HCT116 (cell line): ENCODE measurements at regions of chr17 and their contacts with region 1.

Region 1: DNA sequence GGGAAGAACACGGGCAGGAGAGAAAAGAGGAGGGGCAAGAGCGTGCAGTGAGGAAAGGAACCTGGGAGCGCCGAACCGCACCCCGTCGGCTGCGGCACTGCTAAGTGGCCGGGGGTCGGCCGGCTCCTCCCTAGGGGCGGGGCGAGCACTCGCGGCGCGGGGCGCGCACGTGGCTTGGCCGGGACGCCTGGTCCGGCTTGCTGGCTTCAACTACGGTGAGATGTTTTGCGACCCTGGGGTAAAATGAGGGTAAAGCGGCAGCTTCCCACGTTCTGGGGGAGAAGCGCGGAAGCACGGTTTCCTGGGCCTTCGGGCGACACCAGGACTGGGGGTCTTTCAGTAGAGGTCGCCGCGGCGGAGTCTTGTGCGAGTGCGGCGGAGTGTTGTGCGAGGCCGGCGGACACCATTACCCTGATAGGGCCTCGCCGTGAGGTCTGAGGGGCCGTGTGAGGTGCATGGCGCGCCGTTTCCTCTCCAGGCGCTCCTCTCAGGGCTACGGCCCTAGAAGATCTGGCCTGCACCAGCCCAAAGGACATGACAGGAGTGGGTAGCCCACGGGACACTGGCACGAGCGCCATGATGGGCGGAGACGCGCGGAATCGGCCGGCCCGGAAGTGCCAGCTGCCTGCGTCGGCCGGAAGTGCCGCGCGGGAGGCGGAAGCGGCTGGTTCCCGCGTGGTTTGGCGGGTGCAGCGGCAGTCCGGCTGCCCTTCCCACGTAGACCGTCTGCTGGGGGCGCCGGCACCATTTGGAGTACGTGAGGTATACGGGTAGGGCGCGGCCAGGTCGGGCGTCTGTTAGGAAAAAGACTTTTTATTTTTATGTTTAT is at the starts of genes MYO19 and PIGW:
- DNase-seq: peak; percentile 78
- ATAC-seq: peak; percentile 86
- H3K4me3 ChIP-seq: peak within 1 kb of the TSS; percentile 63 to 90
- H3K27ac ChIP-seq: peak within 1 kb of the TSS; percentile 99
- H3K4me1 ChIP-seq: peaks cover 8 to 21% of the 10 kb centered on the region in 2 experiments
- H3K27me3 ChIP-seq: no peaks in the 10 kb centered on the region
- CTCF ChIP-seq: no peak
- POLR2A ChIP-seq: peak; percentile 75
- RAD21 ChIP-seq: no peak; the same call in 1 of the 2 replicates
- total RNA-seq, gene MYO19: 167 TPM
- total RNA-seq, gene PIGW: 16.4 TPM

Region 2: GRCh38 chr17:36545465-36546417 is 10.7 kb after region 1 on chr17:
- CTCF ChIA-PET with region 1: interaction called, 16 read pairs
- POLR2A ChIA-PET with region 1: interaction called, 30 read pairs
- RAD21 ChIA-PET with region 1: no interaction called
- intact Hi-C with region 1: loop called (anchors 1 kb)
- DNase-seq: peak; percentile 93
- ATAC-seq: peak; percentile 83
- H3K4me3 ChIP-seq: peak overlapping the region; percentile 80 to 97
- H3K27ac ChIP-seq: peak overlapping the region; percentile 86
- H3K4me1 ChIP-seq: peaks cover 11 to 26% of the 10 kb centered on the region in 2 experiments; a peak in 3 of 4 replicates
- H3K27me3 ChIP-seq: no peaks in the 10 kb centered on the region
- CTCF ChIP-seq: no peak
- POLR2A ChIP-seq: no peak
- RAD21 ChIP-seq: no peak